Common myeloid progenitor, CD34-positive (primary cell): ENCODE measurements at regions of chr16 and their contacts with region 1.

Region 1: GRCh38 chr16:49491771-49492761 is 118.5 kb downstream of the C16orf78 start:
- DNase-seq: peak; percentile 38 to 57 (median 55)
- H3K4me3 ChIP-seq: peak overlapping the region in 3 of 7 experiments; percentile 41 to 51 (median 45)
- H3K27ac ChIP-seq: no peak overlapping the region
- H3K4me1 ChIP-seq: peaks cover 0 to 43% (median 25%) of the 10 kb centered on the region in 4 experiments
- H3K27me3 ChIP-seq: no peaks in the 10 kb centered on the region

Region 2: GRCh38 chr16:49369651-49370611 is 122.1 kb before region 1 on chr16:
- CTCF ChIA-PET with region 1: no interaction called
- POLR2A ChIA-PET with region 1: no interaction called
- DNase-seq: no peak
- H3K4me3 ChIP-seq: no peak overlapping the region
- H3K27ac ChIP-seq: no peak overlapping the region
- H3K4me1 ChIP-seq: peaks cover 0 to 7% (median 0%) of the 10 kb centered on the region in 4 experiments
- H3K27me3 ChIP-seq: peaks cover 0 to 2% (median 0%) of the 10 kb centered on the region in 5 experiments

Region 3: GRCh38 chr16:49399594-49400364 is 92.3 kb before region 1 on chr16:
- CTCF ChIA-PET with region 1: no interaction called
- POLR2A ChIA-PET with region 1: no interaction called
- DNase-seq: no peak
- H3K4me3 ChIP-seq: no peak overlapping the region
- H3K27ac ChIP-seq: no peak overlapping the region
- H3K4me1 ChIP-seq: no peaks in the 10 kb centered on the region
- H3K27me3 ChIP-seq: peaks cover 0 to 11% (median 4%) of the 10 kb centered on the region in 5 experiments

Region 4: DNA sequence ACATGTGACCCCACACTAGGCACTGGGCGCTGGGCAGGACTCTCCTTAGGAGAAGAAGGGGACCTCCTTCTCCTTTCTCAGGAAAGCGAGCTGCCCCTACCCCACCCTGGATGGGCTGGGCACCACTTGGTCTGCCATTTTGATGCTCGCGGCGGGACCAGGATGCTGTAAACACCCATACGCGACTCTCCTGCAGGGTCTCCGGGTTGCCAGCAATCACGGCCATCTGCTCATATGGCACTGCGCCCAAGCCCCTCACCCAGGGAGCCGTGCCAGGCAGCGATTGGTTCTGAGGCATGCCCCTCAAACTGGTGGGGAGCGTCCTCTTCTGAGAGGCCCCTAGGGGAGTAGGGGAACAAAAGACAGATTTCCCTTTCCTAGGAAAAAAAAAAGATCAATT is 19.5 kb before region 1 on chr16:
- CTCF ChIA-PET with region 1: interaction called, 10 read pairs
- POLR2A ChIA-PET with region 1: no interaction called
- DNase-seq: no peak
- H3K4me3 ChIP-seq: no peak overlapping the region
- H3K27ac ChIP-seq: no peak overlapping the region
- H3K4me1 ChIP-seq: no peaks in the 10 kb centered on the region
- H3K27me3 ChIP-seq: no peaks in the 10 kb centered on the region

Region 5: DNA sequence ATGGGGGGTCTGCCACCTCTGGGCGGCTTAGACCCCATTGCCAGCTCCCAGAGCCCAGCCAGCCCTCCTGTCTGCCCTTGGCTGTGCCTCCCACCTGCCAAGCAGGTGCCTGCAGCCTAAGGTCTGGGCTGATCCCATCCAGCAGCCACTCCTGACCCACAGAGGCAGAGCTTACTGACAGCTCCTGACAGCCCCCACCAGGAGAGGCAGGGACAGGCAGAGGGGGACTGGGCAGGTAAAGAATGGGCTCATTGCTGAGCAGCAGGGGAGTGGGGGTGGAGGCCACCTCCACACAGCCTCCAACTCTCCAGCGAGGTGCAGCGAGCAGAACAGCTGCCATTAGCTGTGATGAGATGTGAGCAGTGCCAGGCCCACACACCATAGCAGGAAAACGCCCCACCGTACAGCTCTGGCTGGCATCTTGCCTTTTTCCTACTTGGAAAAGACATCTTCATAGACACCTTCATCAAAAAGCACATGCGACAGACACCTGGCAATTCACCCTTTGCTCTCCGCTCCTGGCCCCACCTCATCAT is 45.9 kb after region 1 on chr16:
- CTCF ChIA-PET with region 1: no interaction called
- POLR2A ChIA-PET with region 1: no interaction called
- DNase-seq: no peak
- H3K4me3 ChIP-seq: no peak overlapping the region
- H3K27ac ChIP-seq: no peak overlapping the region
- H3K4me1 ChIP-seq: peaks cover 0 to 2% (median 1%) of the 10 kb centered on the region in 4 experiments
- H3K27me3 ChIP-seq: no peaks in the 10 kb centered on the region